ENCODE measurements at regions of chr17 and their contacts with region 1.

Region 1: GRCh38 chr17:77542551-77543490 is 402.1 kb downstream of the SEC14L1 start:
- DNase-seq: peak; percentile 83
- ATAC-seq: peak; percentile 90
- H3K4me3 Mint-ChIP-seq: no peak overlapping the region
- H3K27ac Mint-ChIP-seq: no peak overlapping the region
- H3K4me1 Mint-ChIP-seq: no peaks in the 10 kb centered on the region
- H3K27me3 Mint-ChIP-seq: peaks cover 3% of the 10 kb centered on the region

Region 2: DNA sequence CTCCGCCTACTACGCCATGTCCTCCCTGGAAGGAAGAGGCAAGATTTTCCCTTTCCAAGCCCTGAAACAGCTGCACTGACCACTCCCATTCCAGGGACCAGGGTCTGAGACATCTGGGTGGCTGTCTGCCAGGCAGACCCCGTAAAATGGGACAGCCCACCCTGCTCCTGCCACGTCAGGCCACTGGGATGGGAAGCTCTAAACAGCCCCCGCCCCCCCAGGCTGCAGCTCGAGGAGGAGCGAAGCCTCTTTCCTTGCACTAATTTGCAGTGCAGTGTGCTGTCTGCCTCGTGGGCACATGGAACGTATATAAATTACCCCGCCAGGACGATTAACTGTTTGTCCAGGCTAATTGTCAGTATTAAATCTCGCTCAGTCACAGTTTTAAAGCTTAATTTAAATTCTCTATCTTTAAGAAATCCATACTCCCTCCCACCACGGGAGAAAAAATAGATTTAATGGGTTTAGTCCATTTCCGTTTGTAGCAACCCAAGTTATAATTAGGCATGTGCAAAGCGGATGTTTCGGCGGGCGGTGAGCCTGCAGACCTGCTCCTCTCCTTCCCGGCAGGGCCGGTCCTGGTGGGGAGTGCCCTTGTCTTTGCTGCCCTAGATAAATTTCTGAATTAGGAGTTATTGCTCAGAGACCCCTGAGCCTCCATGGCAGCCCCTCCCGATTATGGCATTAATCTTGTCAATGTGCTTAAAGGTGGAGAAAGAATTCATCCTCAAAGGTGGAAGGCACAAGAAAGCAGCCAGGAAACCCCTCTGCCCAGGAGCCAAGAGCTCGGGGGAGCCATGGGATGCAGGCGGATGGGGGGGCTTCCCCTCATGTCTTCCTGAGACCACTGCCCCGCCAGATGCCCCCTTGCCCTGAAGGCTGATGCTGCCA is 147.7 kb after region 1 on chr17:
- CTCF ChIA-PET with region 1: no interaction called
- POLR2A ChIA-PET with region 1: no interaction called
- intact Hi-C with region 1: no loop called
- DNase-seq: peak; percentile 28
- ATAC-seq: no peak
- H3K4me3 Mint-ChIP-seq: no peak overlapping the region
- H3K27ac Mint-ChIP-seq: no peak overlapping the region
- H3K4me1 Mint-ChIP-seq: peaks cover 25% of the 10 kb centered on the region
- H3K27me3 Mint-ChIP-seq: no peaks in the 10 kb centered on the region

Region 3: DNA sequence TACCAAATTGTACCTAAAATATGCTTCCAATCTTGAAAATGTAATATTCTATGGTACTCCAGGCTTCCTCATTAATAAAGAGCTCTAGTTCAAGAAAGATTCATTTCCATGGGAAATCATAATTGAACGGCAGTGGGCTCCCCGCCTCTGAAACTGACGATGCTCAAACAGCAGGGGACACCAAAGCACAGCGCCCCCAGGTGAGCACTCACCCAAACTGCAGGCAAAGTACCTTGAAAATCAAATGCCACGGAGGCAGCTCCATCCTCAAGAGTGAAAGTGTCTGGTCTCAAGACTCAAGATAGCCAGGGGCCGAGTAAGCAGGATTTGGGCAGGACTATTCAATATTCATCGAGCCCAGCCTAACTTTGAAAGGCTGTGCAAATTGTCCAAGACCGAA is 198.3 kb after region 1 on chr17:
- CTCF ChIA-PET with region 1: interaction called, 5 read pairs
- POLR2A ChIA-PET with region 1: no interaction called
- intact Hi-C with region 1: loop called (anchors 1 to 5 kb)
- DNase-seq: peak; percentile 76
- ATAC-seq: no peak
- H3K4me3 Mint-ChIP-seq: no peak overlapping the region
- H3K27ac Mint-ChIP-seq: no peak overlapping the region
- H3K4me1 Mint-ChIP-seq: peaks cover 3% of the 10 kb centered on the region
- H3K27me3 Mint-ChIP-seq: peaks cover 2% of the 10 kb centered on the region

Region 4: GRCh38 chr17:77909236-77909635 is 366.4 kb after region 1 on chr17:
- CTCF ChIA-PET with region 1: no interaction called
- POLR2A ChIA-PET with region 1: no interaction called
- intact Hi-C with region 1: loop called in 1 of 2 experiments (anchors 10 kb)
- DNase-seq: no peak
- ATAC-seq: no peak
- H3K4me3 Mint-ChIP-seq: no peak overlapping the region
- H3K27ac Mint-ChIP-seq: no peak overlapping the region
- H3K4me1 Mint-ChIP-seq: no peaks in the 10 kb centered on the region
- H3K27me3 Mint-ChIP-seq: peaks cover 3% of the 10 kb centered on the region

Measured in activated CD4-positive, alpha-beta T cell treated with anti-CD3 and anti-CD28 coated beads for 36 hours (primary cell).